Activated CD4-positive, alpha-beta T cell treated with anti-CD3 and anti-CD28 coated beads, Interleukin-2, amount 10 ng/mL, durations not matched to agents 24 days and 14 days (primary cell): ENCODE measurements at regions of chr7 and their contacts with region 1.

Region 1: DNA sequence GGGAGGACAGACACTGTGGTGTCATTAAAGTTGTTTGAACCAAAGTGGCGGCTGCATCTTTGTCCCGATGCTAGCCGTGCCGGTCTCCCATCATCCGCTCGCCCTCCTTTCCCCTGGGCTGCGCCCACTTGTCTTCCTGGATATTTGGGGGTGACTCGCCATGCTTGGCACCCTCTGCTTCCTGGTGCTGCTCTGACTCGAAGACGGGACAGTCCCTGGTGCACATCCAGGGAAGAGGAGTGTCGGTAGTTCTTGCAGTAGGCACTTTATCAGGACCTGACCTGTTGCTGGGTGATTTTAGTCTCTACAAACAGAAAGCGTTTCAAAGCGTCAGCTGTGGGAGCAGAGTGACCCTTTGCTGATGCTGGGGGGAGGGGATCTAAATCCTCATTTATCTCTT is 68.3 kb upstream of the DNAJB6 start:
- DNase-seq: no peak
- H3K4me3 Mint-ChIP-seq: no peak overlapping the region
- H3K27ac Mint-ChIP-seq: no peak overlapping the region
- H3K4me1 Mint-ChIP-seq: peaks cover 6% of the 10 kb centered on the region
- H3K27me3 Mint-ChIP-seq: no peaks in the 10 kb centered on the region

Region 2: DNA sequence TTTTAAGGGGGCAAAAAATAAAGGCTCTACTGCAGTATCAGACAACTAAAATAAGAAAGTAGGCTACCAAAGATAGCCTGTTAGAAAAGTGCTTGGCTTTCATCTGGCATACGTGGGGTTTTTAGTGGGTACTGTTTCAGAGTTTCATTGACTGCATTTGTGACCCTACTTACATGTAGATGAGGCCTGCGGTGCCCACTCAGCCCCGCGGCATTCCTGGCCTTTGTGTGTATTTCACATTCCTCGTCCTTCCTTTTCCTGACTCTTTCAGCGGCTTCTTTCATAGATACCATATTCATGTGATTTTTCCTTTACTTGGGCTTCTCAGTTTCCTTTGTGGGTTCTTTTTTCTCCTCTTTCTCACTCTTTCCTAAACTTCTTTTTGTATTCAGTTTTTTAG is 79.1 kb before region 1 on chr7:
- intact Hi-C with region 1: no loop called
- DNase-seq: no peak
- H3K4me3 Mint-ChIP-seq: no peak overlapping the region
- H3K27ac Mint-ChIP-seq: no peak overlapping the region
- H3K4me1 Mint-ChIP-seq: no peaks in the 10 kb centered on the region
- H3K27me3 Mint-ChIP-seq: no peaks in the 10 kb centered on the region

Region 3: GRCh38 chr7:157233677-157234076 is 34.9 kb before region 1 on chr7:
- intact Hi-C with region 1: loop called (anchors 5 kb)
- DNase-seq: no peak
- H3K4me3 Mint-ChIP-seq: no peak overlapping the region
- H3K27ac Mint-ChIP-seq: no peak overlapping the region
- H3K4me1 Mint-ChIP-seq: no peaks in the 10 kb centered on the region
- H3K27me3 Mint-ChIP-seq: no peaks in the 10 kb centered on the region